ENCODE measurements at regions of chr2 and their contacts with region 1.

Region 1: DNA sequence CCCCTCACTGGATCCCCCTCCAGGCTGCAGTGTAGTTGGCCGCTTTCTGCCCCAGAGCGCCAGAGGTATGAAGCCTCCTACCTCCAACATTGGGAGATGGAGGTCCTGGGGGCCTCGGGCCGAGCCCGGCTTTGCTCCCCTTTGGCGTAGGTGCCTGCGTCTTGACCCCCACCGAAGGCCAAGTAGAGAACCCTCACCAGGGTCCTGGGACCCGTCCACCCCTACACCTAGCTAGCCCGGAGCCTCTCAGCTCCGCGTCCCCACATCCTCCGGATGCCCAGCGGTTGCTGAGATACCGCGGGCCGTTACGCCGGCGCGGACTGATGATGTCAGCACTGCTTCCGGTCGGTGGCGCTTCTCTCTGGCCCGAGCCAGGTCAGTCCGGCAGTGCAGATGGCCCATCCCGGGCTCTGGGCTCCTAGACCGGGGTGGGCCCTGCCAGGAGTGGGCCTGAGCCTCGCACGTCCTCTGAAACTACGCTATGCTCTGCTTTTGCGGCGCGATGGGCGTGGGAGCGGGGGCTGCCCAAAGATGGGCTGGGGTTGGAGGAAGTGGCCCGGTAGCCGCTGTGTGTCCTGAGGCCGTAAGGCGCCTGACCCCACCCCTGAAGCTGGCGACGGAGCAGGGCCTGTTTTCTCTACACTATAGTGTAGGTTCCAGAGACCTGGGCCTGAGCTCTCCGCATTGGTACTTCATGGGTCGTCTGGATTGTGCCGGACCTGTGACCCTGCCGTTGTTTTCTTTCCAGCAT is at the starts of genes GLB1L and STK16:
- DNase-seq: peak; percentile 93
- ATAC-seq: peak; percentile 62
- H3K4me3 Mint-ChIP-seq: peak within 1 kb of the TSS; percentile 89
- H3K27ac Mint-ChIP-seq: peak within 1 kb of the TSS; percentile 100
- H3K4me1 Mint-ChIP-seq: peaks cover 59% of the 10 kb centered on the region
- H3K27me3 Mint-ChIP-seq: no peaks in the 10 kb centered on the region
- total RNA-seq, gene GLB1L: 2.7 to 4.2 TPM
- total RNA-seq, gene STK16: 34.3 to 35.4 TPM

Region 2: GRCh38 chr2:218322895-218323808 is 922.2 kb before region 1 on chr2:
- CTCF ChIA-PET with region 1: no interaction called
- POLR2A ChIA-PET with region 1: no interaction called
- intact Hi-C with region 1: no loop called
- DNase-seq: peak; percentile 55
- ATAC-seq: peak; percentile 78
- H3K4me3 Mint-ChIP-seq: peak overlapping the region; percentile 69
- H3K27ac Mint-ChIP-seq: no peak overlapping the region
- H3K4me1 Mint-ChIP-seq: peaks cover 38% of the 10 kb centered on the region
- H3K27me3 Mint-ChIP-seq: peaks cover 7% of the 10 kb centered on the region

Region 3: GRCh38 chr2:219218732-219219701 is 26.3 kb before region 1 on chr2 and contains the start of gene ABCB6:
- CTCF ChIA-PET with region 1: interaction called, 15 read pairs
- POLR2A ChIA-PET with region 1: interaction called, 4 read pairs
- intact Hi-C with region 1: no loop called
- DNase-seq: peak; percentile 94
- ATAC-seq: peak; percentile 89
- H3K4me3 Mint-ChIP-seq: peak within 1 kb of the TSS; percentile 83
- H3K27ac Mint-ChIP-seq: peak within 1 kb of the TSS; percentile 74
- H3K4me1 Mint-ChIP-seq: peaks cover 24% of the 10 kb centered on the region
- H3K27me3 Mint-ChIP-seq: no peaks in the 10 kb centered on the region
- total RNA-seq, gene ABCB6: 18.2 to 21.9 TPM

Measured in activated CD4-positive, alpha-beta T cell treated with anti-CD3 and anti-CD28 coated beads for 36 hours (primary cell).